Activated CD4-positive, alpha-beta T cell treated with anti-CD3 and anti-CD28 coated beads for 36 hours (primary cell): ENCODE measurements at regions of chr18 and their contacts with region 1.

Region 1: GRCh38 chr18:76209597-76209996 is 285.4 kb downstream of the ZNF516 start:
- DNase-seq: peak; percentile 37
- ATAC-seq: peak; percentile 87
- H3K4me3 Mint-ChIP-seq: no peak overlapping the region
- H3K27ac Mint-ChIP-seq: peak overlapping the region; percentile 76
- H3K4me1 Mint-ChIP-seq: peaks cover 25% of the 10 kb centered on the region
- H3K27me3 Mint-ChIP-seq: peaks cover 8% of the 10 kb centered on the region

Region 2: DNA sequence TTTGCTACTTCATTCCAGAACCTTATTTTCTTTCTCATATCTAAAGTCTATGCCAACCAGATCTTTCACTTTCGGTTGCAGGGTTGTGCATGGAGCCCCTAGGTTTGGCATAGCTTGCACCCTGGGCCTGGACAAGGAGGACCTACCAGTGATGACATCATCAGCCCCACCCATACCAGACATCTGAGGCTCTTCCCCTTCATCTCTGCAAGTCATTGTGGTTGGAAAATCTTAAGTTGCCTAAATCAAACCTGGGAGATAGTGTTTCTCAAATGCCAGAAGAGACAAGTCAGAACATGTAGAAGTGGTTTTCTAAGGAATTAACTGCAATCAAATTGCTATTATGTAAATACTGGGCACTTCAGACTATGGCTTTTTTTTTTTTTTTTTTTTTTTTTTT is 77.9 kb before region 1 on chr18:
- CTCF ChIA-PET with region 1: no interaction called
- POLR2A ChIA-PET with region 1: no interaction called
- intact Hi-C with region 1: loop called in 1 of 2 experiments (anchors 2 kb)
- DNase-seq: peak; percentile 60
- ATAC-seq: peak; percentile 96
- H3K4me3 Mint-ChIP-seq: no peak overlapping the region
- H3K27ac Mint-ChIP-seq: no peak overlapping the region
- H3K4me1 Mint-ChIP-seq: peaks cover 11% of the 10 kb centered on the region
- H3K27me3 Mint-ChIP-seq: no peaks in the 10 kb centered on the region